ENCODE measurements at regions of chr9 and their contacts with region 1.

Region 1: GRCh38 chr9:68584189-68585033 is 43.7 kb upstream of the TMEM252 start:
- DNase-seq: peak; percentile 83
- ATAC-seq: peak; percentile 94
- H3K4me3 ChIP-seq: no peak overlapping the region
- H3K27ac ChIP-seq: no peak overlapping the region
- H3K4me1 ChIP-seq: no peaks in the 10 kb centered on the region
- H3K27me3 ChIP-seq: no peaks in the 10 kb centered on the region
- CTCF ChIP-seq: peak; percentile 97

Region 2: DNA sequence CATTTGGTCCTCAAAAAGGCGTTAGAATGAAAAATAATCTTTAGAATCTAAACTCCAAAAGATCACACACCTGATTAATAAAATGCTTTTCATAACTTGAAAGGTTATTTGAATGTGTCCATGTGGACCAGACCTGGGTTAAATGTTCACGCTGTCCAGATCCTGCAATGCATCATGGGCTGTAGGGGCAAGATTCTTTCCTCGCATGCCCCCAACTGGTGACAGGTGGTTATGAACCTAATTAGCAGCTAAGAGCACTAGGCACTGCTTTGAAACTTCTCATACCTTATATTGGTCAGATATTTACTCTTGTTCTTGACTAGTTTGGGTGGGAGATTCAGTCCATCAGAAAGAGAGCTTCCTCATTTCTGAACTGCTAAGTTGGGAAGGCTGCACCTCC is 101.4 kb after region 1 on chr9:
- CTCF ChIA-PET with region 1: no interaction called
- POLR2A ChIA-PET with region 1: no interaction called
- intact Hi-C with region 1: loop called (anchors 1 kb)
- DNase-seq: peak; percentile 51
- ATAC-seq: peak; percentile 68
- H3K4me3 ChIP-seq: no peak overlapping the region
- H3K27ac ChIP-seq: no peak overlapping the region
- H3K4me1 ChIP-seq: no peaks in the 10 kb centered on the region
- H3K27me3 ChIP-seq: peaks cover 39% of the 10 kb centered on the region
- CTCF ChIP-seq: peak; percentile 61

Region 3: GRCh38 chr9:68739621-68740174 is 155.3 kb after region 1 on chr9:
- CTCF ChIA-PET with region 1: no interaction called
- POLR2A ChIA-PET with region 1: no interaction called
- intact Hi-C with region 1: loop called (anchors 10 kb)
- DNase-seq: no peak
- ATAC-seq: no peak; the same call in 1 of the 2 replicates
- H3K4me3 ChIP-seq: no peak overlapping the region
- H3K27ac ChIP-seq: no peak overlapping the region
- H3K4me1 ChIP-seq: peaks cover 16% of the 10 kb centered on the region
- H3K27me3 ChIP-seq: 0 out of 2 replicates have a peak, but pooled peaks cover under 1% of the 10 kb centered on the region
- CTCF ChIP-seq: no peak

Region 4: DNA sequence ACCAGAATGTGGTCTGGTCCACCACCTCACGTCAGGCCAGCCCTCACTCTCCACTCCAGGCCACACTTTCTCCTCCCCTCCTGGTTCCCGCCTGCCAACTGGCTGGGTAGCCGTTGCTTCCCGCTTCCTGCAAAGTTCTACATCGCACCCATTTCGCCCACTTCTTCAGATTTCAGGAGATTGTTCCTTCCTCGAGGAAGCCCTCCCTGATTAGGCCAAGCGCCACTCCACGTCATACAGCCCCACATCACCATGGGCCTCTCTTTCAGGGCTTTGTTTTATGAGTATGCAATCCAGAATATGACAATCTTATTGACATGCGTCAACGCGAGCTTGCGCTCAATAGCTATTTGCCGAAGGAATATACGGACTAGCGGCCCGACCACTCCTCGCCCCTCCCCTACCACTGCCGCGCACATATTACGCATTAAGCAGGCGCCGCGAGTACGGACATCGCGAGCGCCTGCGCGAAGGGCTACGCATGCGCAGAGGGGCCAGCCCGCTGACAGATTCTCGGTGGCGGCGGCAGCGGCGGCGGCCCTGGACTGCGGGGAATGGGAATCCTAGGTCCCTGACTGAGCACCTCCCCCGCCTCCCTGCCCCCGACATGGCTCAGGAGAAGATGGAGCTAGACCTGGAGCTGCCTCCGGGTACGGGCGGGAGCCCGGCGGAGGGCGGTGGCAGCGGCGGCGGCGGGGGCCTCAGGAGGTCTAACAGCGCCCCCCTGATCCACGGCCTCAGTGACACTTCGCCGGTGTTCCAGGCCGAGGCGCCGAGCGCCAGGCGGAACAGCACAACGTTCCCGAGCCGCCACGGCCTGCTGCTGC is 195.4 kb after region 1 on chr9:
- CTCF ChIA-PET with region 1: no interaction called
- POLR2A ChIA-PET with region 1: no interaction called
- intact Hi-C with region 1: loop called (anchors 1 kb)
- DNase-seq: peak; percentile 90
- ATAC-seq: peak; percentile 80
- H3K4me3 ChIP-seq: peak overlapping the region; percentile 93
- H3K27ac ChIP-seq: peak overlapping the region; percentile 49
- H3K4me1 ChIP-seq: peaks cover 18% of the 10 kb centered on the region; the same call in 1 of the 2 replicates
- H3K27me3 ChIP-seq: peaks cover 4% of the 10 kb centered on the region; the same call in 1 of the 2 replicates
- CTCF ChIP-seq: peak; percentile 49; the same call in 1 of the 2 replicates

Region 5: DNA sequence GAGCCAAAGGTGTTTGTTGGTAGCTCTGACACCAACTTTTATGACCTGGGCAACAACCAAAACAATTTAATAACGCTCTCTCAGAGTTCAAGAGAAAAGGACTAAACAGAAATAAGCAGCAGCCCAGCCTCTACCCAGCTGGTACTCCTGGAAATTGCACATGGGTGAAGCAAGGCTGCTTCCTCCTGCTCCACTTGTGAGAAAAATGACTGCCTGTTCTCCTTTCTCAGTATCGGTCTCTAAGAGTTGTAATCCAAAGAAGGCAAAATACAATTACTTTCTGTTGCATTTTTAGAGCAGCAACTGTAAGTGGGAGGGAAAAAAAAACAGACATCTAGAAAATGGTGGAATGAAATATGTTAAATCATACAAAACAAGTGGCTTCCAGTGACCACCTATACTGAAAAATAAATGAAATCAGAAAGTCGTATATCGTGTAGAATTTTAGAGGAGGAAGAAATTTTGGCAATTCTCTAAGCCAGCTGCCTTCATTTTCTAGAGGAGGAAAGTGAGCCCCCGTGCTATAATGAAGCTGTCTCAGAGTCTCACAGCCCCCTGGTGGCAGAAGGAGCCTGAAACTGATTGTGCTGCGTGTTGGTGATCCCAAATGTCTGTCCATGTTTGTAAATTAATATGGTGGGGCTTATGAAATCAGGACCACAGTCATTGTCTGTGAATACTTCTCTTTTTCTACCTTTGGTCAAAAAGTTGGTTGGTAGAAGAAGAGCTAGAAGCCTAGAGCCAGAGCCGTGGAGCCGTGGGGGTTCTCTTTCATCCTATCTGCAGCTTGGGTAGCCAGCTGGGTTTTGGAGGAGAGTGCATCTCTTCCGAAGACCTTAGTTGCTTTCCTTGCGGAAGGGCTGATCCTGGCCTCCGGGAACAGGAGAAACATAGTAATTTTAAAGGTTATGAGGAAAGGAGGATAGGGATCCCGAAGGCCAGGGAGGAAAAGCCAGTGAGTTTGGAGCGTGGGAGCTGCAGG is 260.5 kb after region 1 on chr9:
- CTCF ChIA-PET with region 1: no interaction called
- POLR2A ChIA-PET with region 1: no interaction called
- intact Hi-C with region 1: loop called (anchors 1 kb)
- DNase-seq: peak; percentile 24
- ATAC-seq: peak; percentile 37; the same call in 1 of the 2 replicates
- H3K4me3 ChIP-seq: no peak overlapping the region
- H3K27ac ChIP-seq: no peak overlapping the region
- H3K4me1 ChIP-seq: no peaks in the 10 kb centered on the region
- H3K27me3 ChIP-seq: peaks cover 12% of the 10 kb centered on the region
- CTCF ChIP-seq: peak; percentile 62

Region 6: GRCh38 chr9:68949271-68950000 is 365.0 kb after region 1 on chr9:
- CTCF ChIA-PET with region 1: interaction called, 3 read pairs
- POLR2A ChIA-PET with region 1: no interaction called
- intact Hi-C with region 1: loop called (anchors 2 kb)
- DNase-seq: peak; percentile 24
- ATAC-seq: peak; percentile 24; the same call in 1 of the 2 replicates
- H3K4me3 ChIP-seq: no peak overlapping the region
- H3K27ac ChIP-seq: no peak overlapping the region
- H3K4me1 ChIP-seq: no peaks in the 10 kb centered on the region
- H3K27me3 ChIP-seq: peaks cover 45% of the 10 kb centered on the region
- CTCF ChIP-seq: peak; percentile 47; the same call in 1 of the 2 replicates

Region 7: DNA sequence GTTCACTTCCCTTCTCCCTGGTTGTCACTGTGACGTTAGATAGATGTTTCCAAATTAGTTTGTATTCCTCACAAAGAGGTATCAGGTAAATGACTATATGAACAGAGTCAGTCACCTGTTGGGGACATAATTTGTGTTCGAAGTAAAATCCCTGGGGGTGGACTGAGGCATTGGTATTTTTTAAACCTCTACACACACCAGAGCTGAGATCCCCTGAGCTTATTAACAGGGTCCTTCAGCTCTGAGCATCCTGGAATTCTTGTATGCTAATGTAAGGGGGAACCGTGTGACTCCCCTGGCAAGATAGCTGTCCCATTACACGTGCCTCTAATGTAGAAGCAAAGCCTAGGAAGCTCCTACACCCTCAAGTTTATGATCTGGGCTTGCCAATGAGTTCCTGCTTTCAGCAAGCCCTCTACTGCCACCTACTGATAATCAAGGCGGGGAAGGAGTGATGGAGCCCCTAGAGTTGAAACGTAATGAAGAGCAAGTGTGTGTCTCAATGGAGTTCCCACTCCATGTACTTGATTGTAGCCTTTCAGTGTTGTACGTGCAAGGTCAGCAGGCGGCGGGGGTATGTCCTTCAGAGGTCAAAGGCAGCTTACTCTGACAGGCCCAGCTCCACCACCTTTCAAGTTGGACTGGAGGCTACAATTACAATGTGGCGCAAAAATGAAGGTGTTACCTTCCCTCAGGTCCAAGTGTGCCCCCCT is 415.1 kb after region 1 on chr9:
- CTCF ChIA-PET with region 1: no interaction called
- POLR2A ChIA-PET with region 1: no interaction called
- intact Hi-C with region 1: loop called (anchors 1 kb)
- DNase-seq: peak; percentile 76
- ATAC-seq: peak; percentile 92
- H3K4me3 ChIP-seq: no peak overlapping the region
- H3K27ac ChIP-seq: no peak overlapping the region
- H3K4me1 ChIP-seq: no peaks in the 10 kb centered on the region
- H3K27me3 ChIP-seq: peaks cover 27% of the 10 kb centered on the region
- CTCF ChIP-seq: peak; percentile 84

Measured in PC-3 (cell line).